ENCODE measurements at regions of chr15 and their contacts with region 1.

Region 1: DNA sequence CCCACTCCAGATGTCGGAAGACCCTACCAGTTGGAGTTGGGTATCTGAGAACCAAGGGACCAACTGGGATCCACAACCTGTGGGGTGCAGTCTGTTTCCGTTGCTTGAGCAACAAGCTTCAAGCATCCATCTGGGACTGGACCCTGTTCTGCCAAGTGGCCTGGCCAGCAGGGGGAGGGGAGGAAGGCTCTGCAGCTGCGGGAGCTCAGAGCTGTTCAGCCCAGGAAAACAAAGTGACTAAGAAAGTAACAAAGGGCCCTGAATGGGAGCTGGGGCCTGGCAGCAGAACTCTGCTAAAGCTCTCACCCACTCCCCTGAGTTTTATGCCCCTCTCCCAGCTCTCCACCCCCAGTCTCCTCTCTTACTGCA is 2.7 kb downstream of the TYRO3 start:
- DNase-seq: peak; percentile 81
- ATAC-seq: peak; percentile 79

Region 2: GRCh38 chr15:41629463-41629862 is 67.7 kb after region 1 on chr15:
- intact Hi-C with region 1: no loop called
- DNase-seq: no peak
- ATAC-seq: no peak

Region 3: DNA sequence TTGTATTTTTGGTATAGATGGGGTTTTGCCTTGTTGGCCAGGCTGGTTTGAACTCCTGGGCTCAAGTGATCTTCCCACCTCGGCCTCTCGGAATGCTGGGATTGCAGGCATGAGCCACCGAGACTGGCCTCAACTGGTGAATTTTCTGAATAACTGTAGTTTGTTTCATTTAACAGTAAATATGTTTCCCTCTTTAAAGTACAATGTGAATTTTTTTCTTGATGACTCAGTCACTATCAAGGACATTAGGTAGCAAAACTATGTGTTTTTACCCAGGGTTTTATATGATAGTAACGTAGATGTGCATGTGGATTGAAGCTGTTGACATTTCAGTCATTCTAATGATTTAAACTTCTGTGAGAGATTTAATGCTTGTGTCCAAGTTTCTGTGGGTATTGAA is 172.3 kb after region 1 on chr15:
- intact Hi-C with region 1: no loop called
- DNase-seq: no peak
- ATAC-seq: no peak

Region 4: GRCh38 chr15:41811432-41812195 is 249.9 kb after region 1 on chr15:
- intact Hi-C with region 1: loop called (anchors 10 kb)
- DNase-seq: peak; percentile 92
- ATAC-seq: peak; percentile 95

Measured in sciatic nerve (tissue), 2 donors.